Heart left ventricle (tissue), 16 donors: ENCODE measurements at regions of chr18 and their contacts with region 1.

Region 1: DNA sequence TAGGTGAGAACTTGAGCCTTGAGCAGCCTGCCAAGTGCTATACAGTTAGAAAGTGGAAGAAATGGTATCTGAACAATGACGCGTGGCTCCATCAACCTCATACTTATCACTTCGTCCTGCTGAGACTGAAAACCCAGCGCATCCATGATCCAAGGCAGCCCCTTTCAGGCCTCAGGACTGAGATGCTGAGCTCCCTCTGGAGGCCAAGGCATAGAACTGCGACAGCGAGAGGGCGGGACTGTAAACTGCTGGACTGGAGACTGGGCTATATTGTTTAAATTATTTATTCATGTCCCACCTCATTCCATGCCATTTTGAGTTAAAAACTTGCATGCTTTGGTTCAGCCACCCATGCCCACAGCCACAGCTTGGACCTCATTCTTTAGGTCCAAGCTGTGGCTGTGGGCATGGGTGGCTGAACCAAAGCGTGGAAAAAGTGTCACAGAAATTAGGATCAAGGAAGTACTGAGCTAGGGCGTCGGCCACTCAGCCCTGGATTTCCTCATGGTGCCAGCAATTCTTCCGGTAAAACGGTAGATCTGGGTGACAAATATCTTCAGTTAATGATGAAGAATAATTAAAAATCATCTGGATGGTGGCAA is 195.5 kb downstream of the L3MBTL4 start:
- DNase-seq: peak in 3 of 5 donors; percentile 15 to 40 (median 37)
- ATAC-seq: peak in 3 of 4 donors; percentile 62 to 77 (median 65)
- H3K4me3 ChIP-seq: no peak overlapping the region
- H3K27ac ChIP-seq: no peak overlapping the region
- H3K4me1 ChIP-seq: peaks cover 0 to 3% (median 0%) of the 10 kb centered on the region in 12 donors
- H3K27me3 ChIP-seq: no peaks in the 10 kb centered on the region
- CTCF ChIP-seq: peak; percentile 53 to 73 (median 62)
- POLR2A ChIP-seq: no peak

Region 2: GRCh38 chr18:5073026-5073944 is 1145.9 kb before region 1 on chr18:
- intact Hi-C with region 1: loop called in 1 of 10 experiments (anchors 10 kb)
- DNase-seq: peak in 1 of 5 donors; percentile 9
- ATAC-seq: peak in 3 of 4 donors; percentile 56 to 83 (median 72)
- H3K4me3 ChIP-seq: no peak overlapping the region
- H3K27ac ChIP-seq: no peak overlapping the region
- H3K4me1 ChIP-seq: no peaks in the 10 kb centered on the region
- H3K27me3 ChIP-seq: peaks cover 0 to 3% (median 0%) of the 10 kb centered on the region in 9 donors
- CTCF ChIP-seq: peak in 11 of 12 donors; percentile 26 to 70 (median 51)
- POLR2A ChIP-seq: no peak

Region 3: DNA sequence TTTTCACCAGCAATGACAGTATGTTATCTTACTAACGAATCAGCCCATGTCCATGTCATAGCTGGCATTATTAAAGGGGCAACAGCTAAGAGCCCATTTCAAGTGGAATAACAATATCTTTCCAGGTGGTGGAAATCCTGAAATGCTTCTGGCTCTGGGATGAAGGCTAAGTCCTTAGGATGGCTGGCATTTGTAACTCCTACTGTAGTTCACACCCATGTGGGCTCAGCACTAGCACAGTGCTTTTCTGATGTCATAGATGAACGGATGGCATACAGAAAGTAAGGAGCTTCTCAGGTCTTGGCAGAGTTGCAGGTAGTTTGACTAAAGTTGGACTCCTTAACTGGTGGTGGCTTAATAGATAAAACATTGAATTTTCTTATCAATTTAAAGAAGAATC is 333.9 kb before region 1 on chr18:
- intact Hi-C with region 1: loop called in 3 of 10 experiments (anchors 5 to 10 kb)
- DNase-seq: no peak
- ATAC-seq: no peak
- H3K4me3 ChIP-seq: no peak overlapping the region
- H3K27ac ChIP-seq: no peak overlapping the region
- H3K4me1 ChIP-seq: peaks cover 0 to 5% (median 0%) of the 10 kb centered on the region in 12 donors
- H3K27me3 ChIP-seq: peaks cover 0 to 44% (median 4%) of the 10 kb centered on the region in 9 donors
- CTCF ChIP-seq: no peak
- POLR2A ChIP-seq: no peak

Region 4: GRCh38 chr18:6170604-6171003 is 48.6 kb before region 1 on chr18:
- intact Hi-C with region 1: no loop called
- DNase-seq: no peak
- ATAC-seq: no peak
- H3K4me3 ChIP-seq: no peak overlapping the region
- H3K27ac ChIP-seq: no peak overlapping the region
- H3K4me1 ChIP-seq: no peaks in the 10 kb centered on the region
- H3K27me3 ChIP-seq: no peaks in the 10 kb centered on the region
- CTCF ChIP-seq: no peak
- POLR2A ChIP-seq: no peak